Astrocyte of the cerebellum (primary cell): ENCODE measurements at regions of chr3 and their contacts with region 1.

Region 1: DNA sequence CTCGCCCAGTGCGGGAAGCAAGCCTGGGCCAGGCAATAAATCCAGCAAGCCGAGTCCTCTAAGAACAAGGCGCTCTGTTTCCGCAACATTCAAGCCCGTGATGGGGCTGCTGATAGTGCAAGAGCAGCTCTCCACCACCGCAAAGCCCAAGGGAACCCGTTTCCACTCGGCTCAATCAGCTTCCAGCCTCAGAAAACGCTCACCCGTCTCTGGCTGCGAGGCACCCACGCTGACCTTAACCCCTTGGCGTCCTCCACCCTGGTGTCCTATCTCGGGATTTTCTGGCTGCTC is 17.8 kb downstream of the SPATA12 start:
- DNase-seq: no peak
- H3K4me3 ChIP-seq: peak overlapping the region; percentile 79
- CTCF ChIP-seq: no peak

Region 2: DNA sequence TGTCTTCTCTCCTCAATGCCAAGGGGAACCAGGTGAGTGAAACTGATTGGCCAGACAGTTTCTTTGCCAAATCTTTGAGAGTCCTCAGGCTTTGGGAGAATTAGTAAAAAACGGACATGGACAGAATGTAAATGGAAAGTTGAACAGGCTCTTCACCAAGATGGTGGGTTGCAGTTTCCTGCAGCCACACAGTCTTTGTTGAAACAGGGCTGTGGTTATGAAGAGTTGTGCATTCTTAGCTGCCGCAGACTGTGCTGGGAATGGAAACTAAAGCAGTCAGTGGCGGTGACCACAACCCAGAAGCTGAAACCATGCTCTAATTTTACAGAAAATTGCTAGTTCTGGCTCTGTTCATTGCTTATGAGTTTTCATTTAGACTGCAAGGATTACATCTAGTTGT is 353.1 kb before region 1 on chr3:
- in situ Hi-C with region 1: loop called (anchors 25 kb)
- DNase-seq: no peak
- H3K4me3 ChIP-seq: no peak overlapping the region
- CTCF ChIP-seq: no peak

Region 3: DNA sequence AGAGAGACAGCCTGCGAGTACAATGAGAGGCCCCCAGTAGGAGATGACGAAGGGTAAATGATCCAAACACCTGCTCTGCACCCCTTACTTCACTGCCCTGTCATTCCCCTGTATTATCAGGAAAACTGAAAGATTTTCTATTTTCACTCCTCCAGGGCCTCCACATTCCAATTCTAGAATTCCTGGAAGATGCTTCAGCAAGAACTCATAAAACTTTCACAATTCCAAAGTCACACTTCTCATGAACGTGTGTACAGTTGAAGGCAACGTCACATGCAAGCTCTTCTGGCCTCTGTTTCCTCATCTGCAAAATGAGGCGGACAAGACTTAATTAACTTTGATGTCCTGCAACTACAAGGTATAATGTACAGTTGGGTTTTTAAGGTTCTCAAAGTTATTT is 80.6 kb before region 1 on chr3:
- in situ Hi-C with region 1: loop called (anchors 5 kb)
- DNase-seq: no peak
- H3K4me3 ChIP-seq: no peak overlapping the region
- CTCF ChIP-seq: no peak

Region 4: DNA sequence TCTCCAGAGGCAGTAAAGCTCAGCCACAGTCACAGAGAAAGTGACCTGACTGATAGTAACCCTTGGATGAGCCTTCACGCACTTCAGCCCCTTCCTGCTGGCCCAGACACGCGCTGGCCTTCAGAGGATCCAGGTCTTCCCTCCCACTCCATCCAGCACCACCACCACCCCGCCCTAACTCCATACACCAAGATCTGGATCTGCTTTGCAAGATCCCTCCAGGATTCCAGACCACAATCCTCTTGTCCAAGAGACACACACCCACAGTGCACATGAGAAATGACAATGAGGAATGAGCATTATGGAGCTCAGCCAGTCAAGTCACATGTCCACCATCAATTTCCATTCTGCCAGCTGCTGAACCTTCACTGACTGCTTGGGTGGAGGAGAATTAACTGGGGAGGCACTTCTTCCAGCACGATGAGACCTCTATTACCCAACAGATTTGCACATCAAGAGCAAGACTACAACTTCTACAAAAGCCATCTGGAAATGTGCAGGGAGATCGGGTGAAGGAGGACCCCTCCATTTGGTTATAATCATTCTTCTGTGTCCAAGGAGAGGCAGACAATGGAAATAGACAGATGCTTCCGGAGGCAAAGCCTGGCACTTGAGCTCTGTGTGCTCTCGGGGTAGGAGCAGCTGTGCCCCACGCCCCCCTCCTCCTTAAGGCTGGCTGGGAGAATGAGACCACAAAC is 30.2 kb before region 1 on chr3:
- in situ Hi-C with region 1: no loop called
- DNase-seq: peak; percentile 44
- H3K4me3 ChIP-seq: no peak overlapping the region
- CTCF ChIP-seq: no peak

Region 5: DNA sequence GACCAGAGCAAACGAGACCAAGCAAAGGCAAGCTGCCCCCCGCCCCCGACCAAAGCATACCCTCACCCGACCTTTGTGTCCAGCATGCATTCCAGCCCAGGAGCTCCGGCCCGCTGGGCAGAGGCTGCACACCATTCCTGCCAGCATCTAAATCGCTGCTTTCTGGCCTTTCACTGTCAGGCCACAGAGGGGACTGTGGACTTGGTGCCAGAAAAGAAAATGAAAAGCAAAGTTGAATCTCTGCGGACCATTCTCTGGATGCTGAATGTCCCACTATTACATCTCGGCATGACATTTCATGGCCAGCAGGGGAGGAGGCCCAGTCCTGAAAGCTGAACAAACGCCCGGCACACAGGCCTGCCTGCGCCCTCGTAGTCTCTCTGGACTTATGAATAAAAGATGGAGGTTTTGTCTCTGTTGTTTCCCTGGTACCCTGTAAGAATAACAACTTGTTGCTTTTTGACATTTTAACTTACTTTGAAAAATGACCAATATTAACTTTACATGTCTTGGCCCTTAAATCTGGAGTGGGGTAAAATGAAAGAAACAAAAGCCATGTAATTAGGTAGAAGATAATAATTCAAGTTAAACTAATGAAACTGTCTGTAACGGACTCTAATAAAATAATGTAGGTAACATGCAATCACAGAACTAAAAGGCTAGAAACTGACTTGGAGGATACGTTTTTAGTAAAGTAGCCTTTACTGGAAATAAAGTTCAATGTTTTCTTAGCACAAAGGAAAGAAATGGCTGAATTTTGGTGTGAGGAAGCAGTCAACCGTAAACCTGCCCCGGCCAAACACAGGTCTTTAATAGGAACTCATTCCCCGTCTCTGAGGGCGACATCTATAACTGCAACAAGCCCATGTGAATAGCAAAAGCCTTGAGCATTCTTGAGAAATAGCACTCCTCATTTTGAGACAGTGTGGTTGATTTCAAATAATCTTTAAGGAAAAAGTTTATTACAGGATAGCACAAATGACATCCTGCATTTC is 74.2 kb after region 1 on chr3:
- in situ Hi-C with region 1: no loop called
- DNase-seq: no peak
- H3K4me3 ChIP-seq: peak overlapping the region; percentile 11
- CTCF ChIP-seq: peak; percentile 37